T-cell (primary cell): ENCODE measurements at regions of chr1 and their contacts with region 1.

Region 1: DNA sequence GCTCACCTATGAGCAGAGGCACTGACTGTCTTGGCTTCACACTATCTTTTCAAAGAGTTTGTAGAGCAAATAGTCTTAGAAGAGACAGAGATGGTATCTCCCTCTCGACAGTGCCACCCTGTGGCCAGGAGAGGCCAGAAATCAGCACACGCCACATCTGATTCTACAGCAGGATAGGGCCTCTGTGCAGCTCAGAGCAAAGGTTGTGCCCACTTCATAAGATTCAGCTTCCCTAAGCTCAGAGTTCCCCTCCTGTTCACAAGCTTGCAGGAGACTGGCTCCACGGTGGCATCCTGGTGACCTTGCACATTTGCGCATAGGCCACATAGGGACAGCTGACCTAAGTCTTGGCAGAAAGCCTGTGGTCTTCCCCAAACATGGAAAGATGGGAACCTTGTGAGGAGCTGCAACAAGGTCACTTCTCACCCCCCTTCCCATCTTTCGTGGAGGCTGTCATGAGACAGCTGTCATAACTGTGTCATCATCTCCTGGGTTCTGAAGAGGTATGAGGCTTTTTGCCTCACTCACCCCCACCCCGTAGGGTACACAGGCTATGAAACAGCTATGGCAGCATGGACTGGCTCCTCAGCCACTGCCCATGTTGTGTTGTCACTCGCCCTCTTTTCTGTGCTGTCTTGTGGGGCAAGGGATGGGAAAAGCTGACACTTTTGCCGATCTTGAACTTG is 3.0 kb downstream of the ITLN2 start:
- DNase-seq: peak; percentile 45 to 82 (median 68)
- ATAC-seq: peak; percentile 77 to 93 (median 88)
- H3K4me3 ChIP-seq: no peak overlapping the region
- H3K4me3 Mint-ChIP-seq: no peak overlapping the region
- H3K27ac ChIP-seq: no peak overlapping the region
- H3K27ac Mint-ChIP-seq: no peak overlapping the region
- H3K4me1 ChIP-seq: peaks cover 0 to 18% of the 10 kb centered on the region in 2 experiments
- H3K4me1 Mint-ChIP-seq: peaks cover 9 to 12% (median 10%) of the 10 kb centered on the region in 3 donors
- H3K27me3 ChIP-seq: no peaks in the 10 kb centered on the region
- H3K27me3 Mint-ChIP-seq: no peaks in the 10 kb centered on the region

Region 2: DNA sequence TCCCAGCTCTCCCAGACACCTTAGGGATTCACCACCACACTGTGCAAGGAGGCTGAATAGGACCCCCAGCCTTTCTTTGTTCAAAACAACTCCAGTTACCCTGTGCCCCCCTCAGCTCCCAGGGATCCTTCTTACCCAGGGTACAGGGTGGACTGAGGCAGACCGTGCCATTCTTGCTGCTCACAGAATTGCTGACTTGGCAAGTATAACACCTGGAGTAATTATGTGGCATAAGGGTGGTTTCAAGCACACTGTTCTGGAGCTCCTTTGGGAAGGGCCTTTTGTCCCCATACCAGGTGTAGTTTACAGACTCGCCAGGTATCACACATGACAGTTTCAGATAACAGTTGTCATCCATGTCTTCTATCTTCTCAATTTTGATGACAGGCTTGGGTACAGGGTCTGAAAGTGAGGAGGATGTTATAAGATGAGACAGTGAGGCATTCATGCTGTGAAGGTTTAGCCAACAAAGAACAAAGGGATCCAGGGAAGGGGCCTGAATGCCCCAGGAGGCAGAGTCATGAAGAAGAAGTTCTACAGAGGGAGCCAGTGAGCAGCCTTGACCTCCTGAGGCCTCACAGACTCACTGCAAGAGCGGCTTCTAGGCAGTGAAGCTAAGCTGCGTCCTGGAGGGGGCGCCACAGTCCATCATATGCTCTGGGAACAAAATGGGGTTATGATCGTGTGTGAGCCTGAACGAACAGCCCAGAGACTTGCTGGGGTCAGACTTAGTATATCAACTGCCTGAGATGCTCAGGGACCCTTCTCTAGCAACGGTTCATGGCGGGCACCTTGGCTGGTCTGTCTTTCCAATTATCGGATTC is 270.3 kb before region 1 on chr1:
- CTCF ChIA-PET with region 1: interaction called, 9 to 30 read pairs
- POLR2A ChIA-PET with region 1: no interaction called
- DNase-seq: peak; percentile 78 to 95 (median 87)
- ATAC-seq: peak; percentile 82 to 89 (median 87)
- H3K4me3 ChIP-seq: no peak overlapping the region
- H3K4me3 Mint-ChIP-seq: peak overlapping the region in 1 of 3 donors; percentile 63
- H3K27ac ChIP-seq: peak overlapping the region; percentile 48
- H3K27ac Mint-ChIP-seq: peak overlapping the region; percentile 90 to 95
- H3K4me1 ChIP-seq: peaks cover 28 to 55% of the 10 kb centered on the region in 2 experiments
- H3K4me1 Mint-ChIP-seq: peaks cover 52 to 61% (median 57%) of the 10 kb centered on the region in 3 donors
- H3K27me3 ChIP-seq: no peaks in the 10 kb centered on the region
- H3K27me3 Mint-ChIP-seq: no peaks in the 10 kb centered on the region

Region 3: DNA sequence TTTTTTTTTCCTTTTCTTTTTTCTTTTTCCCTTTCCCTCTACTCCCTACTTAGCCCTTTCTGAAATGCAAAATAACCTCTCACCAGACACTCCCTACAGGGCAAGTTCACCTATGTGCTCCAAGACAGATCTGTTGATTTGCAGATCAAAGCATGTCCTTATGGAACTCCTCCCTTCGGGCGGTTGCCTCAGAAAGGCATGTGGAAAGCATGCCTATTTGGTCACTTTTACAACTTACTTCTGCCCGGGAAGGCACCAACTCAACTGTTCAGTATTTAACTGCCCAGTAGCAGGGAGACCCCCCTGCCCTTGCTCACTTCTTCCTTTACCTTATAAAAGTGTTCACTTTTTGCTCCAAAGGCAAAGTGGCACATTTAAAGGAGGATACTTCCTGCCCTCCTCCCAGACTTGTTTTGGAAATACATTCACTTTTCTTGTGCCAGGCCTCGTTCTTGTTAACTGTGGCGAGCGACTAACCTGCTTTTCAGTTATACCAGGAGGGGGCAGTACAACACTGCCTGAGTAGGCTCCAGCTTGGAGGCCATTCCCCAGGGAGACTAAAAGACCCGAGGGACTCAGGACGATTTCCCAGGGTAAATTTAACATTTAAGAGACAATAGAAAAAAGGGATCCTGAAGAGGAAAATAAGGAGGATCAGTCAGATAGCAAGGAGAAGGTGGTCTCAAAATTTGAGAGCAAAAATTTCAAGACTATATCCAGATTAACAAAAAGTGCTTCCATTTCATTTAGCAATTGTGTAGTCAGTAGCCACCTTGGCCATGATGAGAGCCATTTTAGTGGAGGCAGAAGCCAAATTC is 224.9 kb before region 1 on chr1:
- CTCF ChIA-PET with region 1: interaction called, 7 to 13 read pairs
- POLR2A ChIA-PET with region 1: no interaction called
- DNase-seq: peak in 34 of 35 experiments; percentile 19 to 89 (median 52)
- ATAC-seq: peak; percentile 74 to 87 (median 77)
- H3K4me3 ChIP-seq: no peak overlapping the region
- H3K4me3 Mint-ChIP-seq: no peak overlapping the region
- H3K27ac ChIP-seq: no peak overlapping the region
- H3K27ac Mint-ChIP-seq: no peak overlapping the region
- H3K4me1 ChIP-seq: peaks cover 6 to 17% of the 10 kb centered on the region in 2 experiments
- H3K4me1 Mint-ChIP-seq: peaks cover 17 to 18% (median 17%) of the 10 kb centered on the region in 3 donors
- H3K27me3 ChIP-seq: no peaks in the 10 kb centered on the region
- H3K27me3 Mint-ChIP-seq: no peaks in the 10 kb centered on the region

Region 4: GRCh38 chr1:160777486-160778089 is 174.0 kb before region 1 on chr1:
- CTCF ChIA-PET with region 1: interaction called, 18 to 20 read pairs
- POLR2A ChIA-PET with region 1: interaction called in 1 of 2 experiments, 4 read pairs
- DNase-seq: peak in 23 of 35 experiments; percentile 17 to 80 (median 38)
- ATAC-seq: peak; percentile 72 to 80 (median 75)
- H3K4me3 ChIP-seq: no peak overlapping the region
- H3K4me3 Mint-ChIP-seq: no peak overlapping the region
- H3K27ac ChIP-seq: no peak overlapping the region
- H3K27ac Mint-ChIP-seq: peak overlapping the region in 1 of 2 donors; percentile 56
- H3K4me1 ChIP-seq: peaks cover 0 to 21% of the 10 kb centered on the region in 2 experiments
- H3K4me1 Mint-ChIP-seq: peaks cover 25 to 33% (median 28%) of the 10 kb centered on the region in 3 donors
- H3K27me3 ChIP-seq: peaks cover 0 to 7% of the 10 kb centered on the region in 2 experiments
- H3K27me3 Mint-ChIP-seq: peaks cover 0 to 4% of the 10 kb centered on the region in 2 donors

Region 5: DNA sequence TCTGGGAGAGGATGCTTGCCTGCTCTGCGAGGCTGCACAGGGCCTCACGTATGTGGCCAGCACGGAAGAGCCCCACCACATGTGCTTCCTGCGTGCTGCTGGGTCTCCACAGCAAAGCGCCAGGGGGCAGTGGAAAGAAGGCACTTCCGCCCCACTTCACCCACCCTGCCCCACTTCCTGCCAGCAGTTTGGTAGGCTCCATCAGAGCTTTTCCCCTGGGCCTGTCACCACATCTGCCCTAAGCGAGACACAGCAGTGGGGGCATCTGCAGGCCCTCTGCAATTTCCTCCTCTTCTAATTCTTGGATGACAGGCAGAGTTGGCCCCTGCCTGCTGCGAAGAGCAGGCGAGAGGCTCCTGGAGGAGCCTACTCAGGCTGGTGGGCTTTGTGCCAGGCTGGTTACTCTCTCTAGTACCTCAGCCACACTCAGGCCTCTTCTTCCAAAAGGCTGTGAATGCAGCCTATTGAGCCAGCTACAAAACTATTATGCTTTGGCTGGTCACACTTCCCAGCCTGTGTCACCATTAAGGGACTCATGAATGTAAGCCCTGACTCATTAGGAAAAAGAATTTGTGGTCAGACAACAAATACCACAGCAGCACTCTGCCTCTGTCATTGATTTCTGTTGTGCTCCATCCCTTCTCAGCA is 113.9 kb before region 1 on chr1:
- CTCF ChIA-PET with region 1: interaction called, 13 to 73 read pairs
- POLR2A ChIA-PET with region 1: no interaction called
- DNase-seq: peak; percentile 72 to 93 (median 88)
- ATAC-seq: peak; percentile 98 to 99 (median 98)
- H3K4me3 ChIP-seq: peak overlapping the region; percentile 9 to 19
- H3K4me3 Mint-ChIP-seq: peak overlapping the region in 2 of 3 donors; percentile 28 to 72
- H3K27ac ChIP-seq: peak overlapping the region; percentile 88
- H3K27ac Mint-ChIP-seq: peak overlapping the region; percentile 94 to 96
- H3K4me1 ChIP-seq: peaks cover 51 to 74% of the 10 kb centered on the region in 2 experiments
- H3K4me1 Mint-ChIP-seq: peaks cover 71 to 81% (median 72%) of the 10 kb centered on the region in 3 donors
- H3K27me3 ChIP-seq: no peaks in the 10 kb centered on the region
- H3K27me3 Mint-ChIP-seq: no peaks in the 10 kb centered on the region

Region 6: GRCh38 chr1:160877221-160877620 is 74.4 kb before region 1 on chr1:
- CTCF ChIA-PET with region 1: no interaction called
- POLR2A ChIA-PET with region 1: no interaction called
- DNase-seq: peak in 11 of 35 experiments; percentile 6 to 70 (median 20)
- ATAC-seq: peak; percentile 69 to 81 (median 74)
- H3K4me3 ChIP-seq: no peak overlapping the region
- H3K4me3 Mint-ChIP-seq: no peak overlapping the region
- H3K27ac ChIP-seq: no peak overlapping the region
- H3K27ac Mint-ChIP-seq: peak overlapping the region; percentile 19 to 66
- H3K4me1 ChIP-seq: peaks cover 2 to 21% of the 10 kb centered on the region in 2 experiments
- H3K4me1 Mint-ChIP-seq: peaks cover 21 to 27% (median 27%) of the 10 kb centered on the region in 3 donors
- H3K27me3 ChIP-seq: no peaks in the 10 kb centered on the region
- H3K27me3 Mint-ChIP-seq: no peaks in the 10 kb centered on the region

Region 7: DNA sequence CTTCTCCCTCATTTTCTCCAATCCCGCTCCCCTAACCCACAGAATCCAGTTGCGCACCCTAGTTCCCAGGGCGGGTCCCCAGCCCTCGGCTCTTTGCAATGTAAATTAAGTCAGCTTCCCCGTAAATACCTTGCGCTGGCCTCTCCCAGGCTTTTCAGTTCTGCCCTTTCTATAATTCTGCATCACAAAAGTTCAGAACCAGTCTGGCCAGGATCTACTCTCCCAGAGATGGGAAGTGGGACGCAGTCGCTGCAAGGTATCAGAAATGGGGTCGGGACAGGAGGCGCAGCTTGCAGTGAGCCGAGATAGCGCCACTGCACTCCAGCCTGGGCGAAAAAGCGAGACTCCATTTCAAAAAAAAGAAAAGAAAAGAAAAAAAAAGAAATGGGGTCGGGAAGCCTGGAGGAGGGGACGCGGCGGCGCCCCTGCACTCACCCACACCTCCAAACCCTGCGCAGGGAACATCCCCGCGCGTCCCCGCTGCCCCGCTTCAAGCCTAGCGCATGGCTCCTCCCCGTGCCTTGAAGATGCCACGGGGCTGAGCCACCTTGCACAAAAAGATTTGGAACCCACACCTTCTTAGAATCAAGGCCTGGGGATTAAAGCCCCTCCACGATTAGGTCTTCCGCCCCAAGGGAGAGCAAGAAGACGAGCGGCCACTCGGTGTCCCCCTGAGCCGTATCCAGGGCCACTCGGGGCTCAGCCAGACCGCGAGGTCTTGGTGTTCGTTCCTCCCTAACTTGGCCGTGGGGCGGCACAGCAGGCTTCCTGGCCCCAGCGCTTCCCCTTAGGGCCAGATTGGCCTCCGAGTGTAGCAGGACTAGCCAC is 30.2 kb after region 1 on chr1:
- CTCF ChIA-PET with region 1: interaction called in 1 of 2 experiments, 12 read pairs
- POLR2A ChIA-PET with region 1: no interaction called
- DNase-seq: peak in 8 of 35 experiments; percentile 4 to 17 (median 6)
- ATAC-seq: peak; percentile 48 to 78 (median 68)
- H3K4me3 ChIP-seq: peak overlapping the region in 1 of 2 donors; percentile 72
- H3K4me3 Mint-ChIP-seq: peak overlapping the region; percentile 57 to 63 (median 61)
- H3K27ac ChIP-seq: no peak overlapping the region
- H3K27ac Mint-ChIP-seq: no peak overlapping the region
- H3K4me1 ChIP-seq: peaks cover 0 to 11% of the 10 kb centered on the region in 2 experiments
- H3K4me1 Mint-ChIP-seq: peaks cover 10 to 14% (median 10%) of the 10 kb centered on the region in 3 donors
- H3K27me3 ChIP-seq: peaks cover 0 to 41% of the 10 kb centered on the region in 2 experiments
- H3K27me3 Mint-ChIP-seq: peaks cover 21 to 29% of the 10 kb centered on the region in 2 donors

Region 8: DNA sequence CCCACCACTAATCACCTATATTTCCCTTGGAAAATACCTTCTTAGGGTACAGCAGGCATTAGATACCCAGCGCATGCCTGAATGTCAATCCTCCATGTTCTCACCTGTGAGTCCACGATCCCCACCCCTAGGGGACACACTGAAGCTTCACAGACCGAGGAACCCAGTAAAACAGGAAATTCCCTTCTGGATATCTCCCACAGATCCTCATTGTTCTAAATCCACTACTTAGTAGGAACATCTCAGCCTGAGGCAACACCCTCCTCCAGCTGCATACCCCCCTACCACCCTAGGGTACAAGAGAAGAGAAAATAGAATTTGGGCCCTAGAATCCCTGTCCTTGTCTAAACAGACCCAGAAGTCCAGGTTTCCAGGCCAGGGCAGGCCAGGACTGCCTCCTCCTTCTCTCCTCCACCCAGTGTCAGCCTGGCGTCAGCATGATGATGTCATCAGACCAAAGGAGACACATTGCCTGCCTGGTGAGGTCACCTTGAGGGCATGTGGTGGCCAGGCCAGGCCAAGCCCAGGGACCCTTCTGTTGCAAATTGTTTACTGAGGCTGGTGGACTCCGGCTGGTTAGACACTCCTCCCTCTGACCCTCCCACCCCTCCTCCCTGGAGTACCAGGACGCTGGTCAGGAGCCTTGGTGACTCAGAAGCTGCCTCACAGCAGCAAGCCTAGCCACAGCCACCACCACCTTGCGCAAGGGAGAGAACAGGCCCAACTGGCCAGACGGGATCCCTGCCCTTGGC is 131.6 kb after region 1 on chr1:
- CTCF ChIA-PET with region 1: no interaction called
- POLR2A ChIA-PET with region 1: no interaction called
- DNase-seq: peak in 4 of 35 experiments; percentile 17 to 54 (median 22)
- ATAC-seq: no peak
- H3K4me3 ChIP-seq: no peak overlapping the region
- H3K4me3 Mint-ChIP-seq: no peak overlapping the region
- H3K27ac ChIP-seq: no peak overlapping the region
- H3K27ac Mint-ChIP-seq: no peak overlapping the region
- H3K4me1 ChIP-seq: no peaks in the 10 kb centered on the region
- H3K4me1 Mint-ChIP-seq: no peaks in the 10 kb centered on the region
- H3K27me3 ChIP-seq: peaks cover 0 to 5% of the 10 kb centered on the region in 2 experiments
- H3K27me3 Mint-ChIP-seq: no peaks in the 10 kb centered on the region